ENCODE measurements at regions of chr1 and their contacts with region 1.

Region 1: DNA sequence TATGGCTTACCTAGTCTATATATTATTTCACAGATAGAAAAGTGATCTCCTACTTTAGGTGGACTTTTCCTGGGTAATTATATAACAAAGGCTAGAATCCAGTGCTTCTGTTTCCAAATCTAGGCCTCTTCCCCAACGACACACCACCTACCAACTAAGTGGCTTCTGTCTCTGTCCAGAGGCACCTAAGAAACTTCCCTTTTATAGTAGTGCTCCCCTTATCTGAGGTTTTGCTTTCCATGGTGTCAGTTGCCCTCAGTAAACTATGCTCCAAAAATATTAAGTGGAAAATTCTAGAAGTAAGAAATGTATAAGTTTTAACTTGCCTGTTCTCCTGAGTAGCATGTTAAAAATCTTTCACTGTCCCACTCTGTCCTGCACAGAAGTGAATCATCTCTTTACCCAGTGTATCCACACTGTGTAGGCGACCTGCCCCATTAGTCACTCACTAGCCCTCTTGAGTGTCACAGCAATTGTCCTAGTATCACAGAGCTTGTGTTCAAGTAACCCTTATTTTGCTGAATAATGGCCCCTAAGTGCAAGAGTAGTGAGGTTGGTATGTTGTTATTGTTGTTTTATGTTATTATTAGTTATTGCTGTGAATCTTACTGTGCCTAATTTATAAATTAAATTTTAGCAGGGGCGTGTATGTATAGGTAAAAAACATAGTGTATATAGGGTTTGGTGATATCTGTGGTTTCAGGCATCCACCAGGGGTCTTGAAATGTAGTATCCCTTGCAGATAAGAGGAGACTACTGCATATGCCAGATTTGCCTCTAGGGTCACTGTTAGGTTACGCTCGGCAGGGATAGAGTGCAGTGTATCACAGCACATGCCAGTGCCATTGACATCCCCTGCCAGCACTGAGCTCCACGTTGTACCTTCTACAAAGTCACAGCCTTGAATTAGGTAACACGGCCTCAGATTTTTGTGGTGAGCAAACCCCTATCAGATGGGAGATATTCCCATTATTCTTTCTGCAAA is 14.7 kb upstream of the CD53 start:
- DNase-seq: no peak
- H3K4me3 ChIP-seq: no peak overlapping the region
- H3K27ac ChIP-seq: no peak overlapping the region
- H3K4me1 ChIP-seq: no peaks in the 10 kb centered on the region
- H3K27me3 ChIP-seq: peaks cover 30% of the 10 kb centered on the region
- CTCF ChIP-seq: no peak

Region 2: GRCh38 chr1:110390692-110391245 is 467.5 kb before region 1 on chr1 and contains the start of gene SLC16A4:
- CTCF ChIA-PET with region 1: no interaction called
- POLR2A ChIA-PET with region 1: interaction called, 13 read pairs
- intact Hi-C with region 1: no loop called
- DNase-seq: peak in 1 of 2 experiments; percentile 42
- H3K4me3 ChIP-seq: no peak within 1 kb of the TSS
- H3K27ac ChIP-seq: no peak within 1 kb of the TSS
- H3K4me1 ChIP-seq: peaks cover 23% of the 10 kb centered on the region
- H3K27me3 ChIP-seq: no peaks in the 10 kb centered on the region
- CTCF ChIP-seq: no peak
- total RNA-seq, gene SLC16A4: 24.6 and 32.7 TPM in 2 replicates

Region 3: GRCh38 chr1:110674337-110675059 is 183.8 kb before region 1 on chr1 and contains the start of gene KCNA3:
- CTCF ChIA-PET with region 1: no interaction called
- POLR2A ChIA-PET with region 1: no interaction called
- intact Hi-C with region 1: no loop called
- DNase-seq: no peak
- H3K4me3 ChIP-seq: no peak within 1 kb of the TSS
- H3K27ac ChIP-seq: no peak within 1 kb of the TSS
- H3K4me1 ChIP-seq: no peaks in the 10 kb centered on the region
- H3K27me3 ChIP-seq: peaks cover 16% of the 10 kb centered on the region; the same call in 1 of the 2 replicates
- CTCF ChIP-seq: no peak
- total RNA-seq, gene KCNA3: not detected in 2 replicates